Activated CD4-positive, alpha-beta memory T cell treated with anti-CD3 and anti-CD28 coated beads, Interleukin-2, amount 10 ng/mL, durations not matched to agents 7 days and 5 days (primary cell): ENCODE measurements at regions of chrX and their contacts with region 1.

Region 1: GRCh38 chrX:41084044-41084892 is 977 bp upstream of the USP9X start:
- DNase-seq: peak; percentile 94
- H3K4me3 Mint-ChIP-seq: peak overlapping the region; percentile 82
- H3K27ac Mint-ChIP-seq: peak overlapping the region; percentile 97
- H3K4me1 Mint-ChIP-seq: peaks cover 22% of the 10 kb centered on the region
- H3K27me3 Mint-ChIP-seq: no peaks in the 10 kb centered on the region

Region 2: DNA sequence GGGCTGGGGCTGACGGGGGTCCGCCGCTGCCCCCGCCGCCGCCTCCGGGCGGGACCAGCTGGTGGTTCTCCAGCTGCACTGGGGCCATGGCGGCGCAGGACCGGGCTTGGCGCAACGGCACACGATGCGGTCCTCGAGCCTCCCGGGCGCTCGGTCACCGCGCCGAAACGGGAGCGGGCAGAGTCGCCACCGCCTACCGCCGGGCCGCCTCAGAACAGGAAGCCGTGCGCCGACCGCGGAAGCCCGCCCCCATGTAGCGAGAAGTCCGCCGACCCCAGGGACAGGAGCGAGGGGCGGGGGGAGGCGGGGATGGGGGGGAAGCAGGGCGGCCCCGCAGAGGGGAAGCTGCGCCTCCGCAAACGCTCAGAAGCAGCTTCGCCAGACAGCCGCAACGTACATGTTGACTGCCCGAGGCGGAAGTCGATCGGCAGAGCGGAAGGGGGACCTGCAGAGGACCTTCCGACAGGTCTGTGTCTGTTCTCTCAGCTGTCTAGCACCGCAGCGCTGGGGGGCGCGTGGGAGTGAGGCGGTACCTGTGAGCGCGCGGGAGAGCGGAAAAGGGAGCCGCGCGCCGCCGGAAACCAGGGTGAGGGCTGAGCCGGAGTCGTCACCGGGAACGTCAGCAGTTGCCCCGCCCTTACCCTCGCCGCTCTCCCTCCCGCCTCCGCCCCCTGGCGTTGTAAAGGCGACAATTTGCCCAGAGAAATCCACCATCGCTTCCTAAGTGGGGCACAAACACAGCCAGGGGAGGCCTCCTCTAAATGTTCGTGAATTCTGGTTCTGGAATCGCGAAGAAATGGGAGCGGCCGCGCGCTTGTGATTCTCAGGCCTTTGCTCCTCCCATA is 348.7 kb before region 1 on chrX and contains the start of gene MED14:
- CTCF ChIA-PET with region 1: interaction called, 3 read pairs
- POLR2A ChIA-PET with region 1: interaction called, 23 read pairs
- DNase-seq: peak; percentile 87
- H3K4me3 Mint-ChIP-seq: peak within 1 kb of the TSS; percentile 83
- H3K27ac Mint-ChIP-seq: peak within 1 kb of the TSS; percentile 92
- H3K4me1 Mint-ChIP-seq: peaks cover 35% of the 10 kb centered on the region
- H3K27me3 Mint-ChIP-seq: no peaks in the 10 kb centered on the region
- total RNA-seq, gene MED14: 41.4 to 42.7 TPM

Region 3: DNA sequence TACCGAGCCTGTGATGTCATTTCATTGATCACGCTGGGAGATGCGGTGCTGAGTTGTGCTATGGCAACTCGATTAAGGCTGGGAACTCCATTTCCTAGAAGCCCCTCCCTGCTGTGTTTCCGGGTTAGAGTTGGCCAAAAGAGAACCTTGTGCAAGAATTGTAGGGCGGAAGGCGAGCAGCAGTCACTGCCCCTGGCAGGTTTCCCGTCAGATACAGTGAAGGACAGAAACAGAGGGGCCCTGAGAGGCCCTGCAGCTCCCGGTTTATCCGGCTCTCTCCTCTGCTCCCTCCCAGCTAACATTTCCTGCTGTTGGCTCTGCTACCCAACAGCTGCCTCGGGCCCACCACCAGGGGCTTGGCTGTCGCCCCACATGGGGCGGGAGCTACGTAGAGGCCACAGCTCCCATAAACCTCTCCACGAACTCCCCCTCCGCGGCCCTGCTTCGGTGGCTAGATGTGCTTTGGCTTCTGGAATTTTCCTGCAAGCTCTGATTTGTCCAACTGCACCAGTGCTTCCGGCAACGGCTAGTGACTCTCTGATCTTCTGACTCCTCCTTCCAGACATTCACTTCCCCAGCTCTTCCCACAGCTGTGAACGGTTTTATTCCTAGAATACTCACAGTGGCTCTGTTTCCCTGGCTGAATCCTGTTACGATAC is 74.0 kb before region 1 on chrX:
- CTCF ChIA-PET with region 1: no interaction called
- POLR2A ChIA-PET with region 1: interaction called, 21 read pairs
- DNase-seq: peak; percentile 69
- H3K4me3 Mint-ChIP-seq: peak overlapping the region; percentile 66
- H3K27ac Mint-ChIP-seq: peak overlapping the region; percentile 64
- H3K4me1 Mint-ChIP-seq: peaks cover 27% of the 10 kb centered on the region
- H3K27me3 Mint-ChIP-seq: peaks cover 7% of the 10 kb centered on the region

Region 4: GRCh38 chrX:41027431-41027831 is 56.8 kb before region 1 on chrX:
- CTCF ChIA-PET with region 1: no interaction called
- POLR2A ChIA-PET with region 1: no interaction called
- DNase-seq: no peak
- H3K4me3 Mint-ChIP-seq: no peak overlapping the region
- H3K27ac Mint-ChIP-seq: no peak overlapping the region
- H3K4me1 Mint-ChIP-seq: no peaks in the 10 kb centered on the region
- H3K27me3 Mint-ChIP-seq: no peaks in the 10 kb centered on the region

Region 5: DNA sequence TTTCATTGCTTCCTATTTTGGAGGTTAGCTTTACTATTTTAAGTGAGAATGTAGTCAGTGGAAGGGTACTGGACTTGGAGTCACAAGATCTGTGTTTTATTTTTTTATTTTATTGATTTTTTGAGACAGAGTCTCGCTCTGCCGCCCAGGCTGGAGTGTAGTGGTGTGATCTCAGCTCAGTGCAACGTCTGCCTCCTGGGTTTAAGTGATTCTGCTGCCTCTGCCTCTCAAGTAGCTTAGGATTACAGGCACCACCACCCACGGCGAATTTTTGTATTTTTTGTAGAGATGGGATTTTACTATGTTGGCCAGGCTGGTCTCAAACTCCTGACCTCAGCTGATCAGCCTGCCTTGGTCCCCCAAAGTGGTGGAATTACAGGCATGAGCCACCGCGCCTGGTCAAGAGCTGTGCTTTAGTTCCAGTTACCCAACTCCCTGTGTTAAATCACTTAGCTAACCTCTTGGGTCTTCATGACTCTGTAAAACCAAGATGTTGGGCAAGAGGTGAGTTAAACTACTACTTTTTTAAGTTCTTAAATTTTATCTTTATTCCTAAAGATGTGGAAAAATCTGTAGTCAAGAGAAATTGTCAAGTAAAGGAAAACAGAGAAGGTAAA is 12.2 kb after region 1 on chrX:
- CTCF ChIA-PET with region 1: no interaction called
- POLR2A ChIA-PET with region 1: interaction called, 20 read pairs
- DNase-seq: no peak
- H3K4me3 Mint-ChIP-seq: no peak overlapping the region
- H3K27ac Mint-ChIP-seq: no peak overlapping the region
- H3K4me1 Mint-ChIP-seq: peaks cover 37% of the 10 kb centered on the region
- H3K27me3 Mint-ChIP-seq: no peaks in the 10 kb centered on the region

Region 6: GRCh38 chrX:41116948-41117347 is 32.7 kb after region 1 on chrX:
- CTCF ChIA-PET with region 1: interaction called, 23 read pairs
- POLR2A ChIA-PET with region 1: interaction called, 43 read pairs
- DNase-seq: no peak
- H3K4me3 Mint-ChIP-seq: peak overlapping the region; percentile 66
- H3K27ac Mint-ChIP-seq: peak overlapping the region; percentile 72
- H3K4me1 Mint-ChIP-seq: peaks cover 66% of the 10 kb centered on the region
- H3K27me3 Mint-ChIP-seq: no peaks in the 10 kb centered on the region

Region 7: DNA sequence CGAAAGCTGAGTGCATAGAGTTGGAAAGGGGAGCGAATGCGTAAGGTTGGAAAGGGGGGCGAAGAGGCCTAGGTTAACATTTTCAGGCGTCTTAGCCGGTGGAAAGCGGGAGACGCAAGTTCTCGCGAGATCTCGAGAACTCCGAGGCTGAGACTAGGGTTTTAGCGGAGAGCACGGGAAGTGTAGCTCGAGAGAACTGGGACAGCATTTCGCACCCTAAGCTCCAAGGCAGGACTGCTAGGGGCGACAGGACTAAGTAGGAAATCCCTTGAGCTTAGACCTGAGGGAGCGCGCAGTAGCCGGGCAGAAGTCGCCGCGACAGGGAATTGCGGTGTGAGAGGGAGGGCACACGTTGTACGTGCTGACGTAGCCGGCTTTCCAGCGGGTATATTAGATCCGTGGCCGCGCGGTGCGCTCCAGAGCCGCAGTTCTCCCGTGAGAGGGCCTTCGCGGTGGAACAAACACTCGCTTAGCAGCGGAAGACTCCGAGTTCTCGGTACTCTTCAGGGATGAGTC is 249.5 kb after region 1 on chrX and contains the start of gene DDX3X:
- CTCF ChIA-PET with region 1: no interaction called
- POLR2A ChIA-PET with region 1: interaction called, 11 read pairs
- DNase-seq: peak; percentile 86
- H3K4me3 Mint-ChIP-seq: peak within 1 kb of the TSS; percentile 87
- H3K27ac Mint-ChIP-seq: peak within 1 kb of the TSS; percentile 100
- H3K4me1 Mint-ChIP-seq: peaks cover 37% of the 10 kb centered on the region
- H3K27me3 Mint-ChIP-seq: no peaks in the 10 kb centered on the region
- total RNA-seq, gene DDX3X: 224 to 225 TPM